ENCODE measurements at regions of chr9 and their contacts with region 1.

Region 1: DNA sequence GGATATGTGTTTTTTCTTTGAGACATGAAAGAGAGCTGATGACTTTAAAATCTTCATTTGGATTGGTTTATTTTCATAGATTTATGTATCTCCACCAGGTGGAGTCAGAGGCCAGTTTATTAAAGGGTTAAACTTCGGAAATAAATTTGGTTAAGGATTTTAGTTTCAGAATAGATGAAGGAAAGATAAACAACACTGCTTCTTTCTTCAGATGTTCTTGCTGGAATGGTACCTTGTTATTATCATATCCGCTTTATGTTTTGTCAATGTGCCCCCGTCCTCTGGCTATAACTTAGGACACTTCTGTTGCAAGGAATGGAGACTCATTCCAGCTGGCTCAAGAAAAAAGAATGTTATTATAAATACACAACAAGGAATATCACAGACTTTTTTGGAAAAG is 81.2 kb downstream of the ALDH1A1 start:
- DNase-seq: no peak
- ATAC-seq: no peak
- H3K4me3 ChIP-seq: peak overlapping the region in 2 of 4 donors; percentile 30 to 32
- H3K27ac ChIP-seq: no peak overlapping the region
- H3K4me1 ChIP-seq: peaks cover 6 to 20% of the 10 kb centered on the region in 2 donors
- H3K27me3 ChIP-seq: no peaks in the 10 kb centered on the region
- CTCF ChIP-seq: peak; percentile 49 to 53 (median 50)
- POLR2A ChIP-seq: no peak

Region 2: DNA sequence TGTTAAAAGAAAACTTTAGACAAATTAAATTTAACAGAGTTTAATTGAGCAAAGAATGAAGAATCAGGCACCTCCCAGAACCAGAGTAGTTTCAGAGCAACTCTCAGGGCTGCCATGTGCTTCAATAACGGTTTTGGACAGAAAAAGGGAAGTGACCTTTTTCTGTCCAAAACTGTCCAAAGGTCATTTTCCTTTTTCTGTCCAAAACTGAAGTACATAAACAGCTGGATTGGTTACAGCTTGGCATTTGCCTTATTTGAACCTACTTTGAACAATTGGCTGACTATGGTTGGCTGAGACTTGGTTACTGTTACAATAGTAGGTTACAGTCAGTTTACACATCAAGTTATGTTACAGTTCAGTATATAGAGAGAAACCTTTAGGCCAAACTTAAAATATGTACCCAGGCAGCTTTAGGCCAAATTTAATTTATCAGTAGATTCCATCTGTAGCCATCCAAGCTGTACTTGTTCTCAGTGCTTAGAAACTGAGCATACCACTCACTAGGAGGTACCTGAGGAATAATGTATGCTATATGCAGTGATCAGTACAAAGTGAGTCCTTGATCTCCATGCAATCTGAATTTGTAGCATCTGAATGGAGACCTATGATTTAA is 916.3 kb before region 1 on chr9:
- in situ Hi-C with region 1: no loop called
- intact Hi-C with region 1: loop called (anchors 5 kb)
- DNase-seq: no peak
- ATAC-seq: no peak
- H3K4me3 ChIP-seq: no peak overlapping the region
- H3K27ac ChIP-seq: no peak overlapping the region
- H3K4me1 ChIP-seq: peaks cover 0 to 3% of the 10 kb centered on the region in 2 donors
- H3K27me3 ChIP-seq: no peaks in the 10 kb centered on the region
- CTCF ChIP-seq: no peak
- POLR2A ChIP-seq: no peak

Region 3: DNA sequence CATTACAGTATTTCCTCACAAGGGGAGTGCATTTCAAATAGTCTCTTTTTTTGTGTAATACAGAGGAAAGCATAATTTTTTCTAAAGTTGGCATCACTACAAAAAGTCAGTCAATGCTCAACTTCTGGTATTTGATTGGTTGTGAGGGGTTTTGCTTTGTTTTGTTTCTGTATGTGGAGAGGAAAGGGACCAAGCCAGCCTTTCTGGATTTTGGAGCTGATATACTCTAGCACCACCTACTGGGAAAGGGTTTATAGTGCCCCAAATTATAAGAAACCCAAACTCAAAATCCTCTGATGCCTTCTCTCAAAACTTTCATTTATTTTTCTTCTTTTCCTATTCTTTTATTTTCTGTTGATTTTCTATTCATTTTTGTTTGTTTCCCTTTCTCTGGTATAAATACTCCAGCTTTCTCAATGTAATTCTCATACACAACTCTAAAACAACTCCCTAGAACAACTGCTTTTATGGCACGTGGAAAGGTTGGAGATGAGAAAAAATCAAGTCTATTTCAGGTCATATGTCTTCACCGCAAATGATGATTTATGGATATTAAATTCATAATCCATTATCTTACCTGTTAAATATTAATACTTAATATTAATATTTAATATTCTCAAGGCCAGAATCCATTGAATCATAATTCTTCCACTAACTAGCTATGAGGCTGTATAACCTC is 210.4 kb after region 1 on chr9:
- in situ Hi-C with region 1: loop called in 1 of 4 experiments (anchors 25 kb)
- intact Hi-C with region 1: loop called (anchors 1 kb)
- DNase-seq: no peak
- ATAC-seq: peak; percentile 56 to 70
- H3K4me3 ChIP-seq: no peak overlapping the region
- H3K27ac ChIP-seq: no peak overlapping the region
- H3K4me1 ChIP-seq: no peaks in the 10 kb centered on the region
- H3K27me3 ChIP-seq: no peaks in the 10 kb centered on the region
- CTCF ChIP-seq: peak; percentile 30 to 78 (median 49)
- POLR2A ChIP-seq: no peak

Region 4: GRCh38 chr9:73565833-73566465 is 694.3 kb after region 1 on chr9:
- in situ Hi-C with region 1: no loop called
- intact Hi-C with region 1: no loop called
- DNase-seq: no peak
- ATAC-seq: no peak
- H3K4me3 ChIP-seq: no peak overlapping the region
- H3K27ac ChIP-seq: no peak overlapping the region
- H3K4me1 ChIP-seq: no peaks in the 10 kb centered on the region
- H3K27me3 ChIP-seq: no peaks in the 10 kb centered on the region
- CTCF ChIP-seq: no peak
- POLR2A ChIP-seq: no peak

Measured in gastrocnemius medialis (tissue), 4 donors.